ENCODE measurements at regions of chr5 and their contacts with region 1.

Region 1: GRCh38 chr5:54217826-54218503 is 92.4 kb downstream of the ARL15 start:
- DNase-seq: peak; percentile 13
- CTCF ChIP-seq: peak; percentile 52

Region 2: GRCh38 chr5:53481887-53482716 is 735.9 kb before region 1 on chr5:
- in situ Hi-C with region 1: loop called (anchors 25 kb)
- DNase-seq: peak; percentile 77
- CTCF ChIP-seq: no peak